ENCODE measurements at regions of chr6 and their contacts with region 1.

Region 1: DNA sequence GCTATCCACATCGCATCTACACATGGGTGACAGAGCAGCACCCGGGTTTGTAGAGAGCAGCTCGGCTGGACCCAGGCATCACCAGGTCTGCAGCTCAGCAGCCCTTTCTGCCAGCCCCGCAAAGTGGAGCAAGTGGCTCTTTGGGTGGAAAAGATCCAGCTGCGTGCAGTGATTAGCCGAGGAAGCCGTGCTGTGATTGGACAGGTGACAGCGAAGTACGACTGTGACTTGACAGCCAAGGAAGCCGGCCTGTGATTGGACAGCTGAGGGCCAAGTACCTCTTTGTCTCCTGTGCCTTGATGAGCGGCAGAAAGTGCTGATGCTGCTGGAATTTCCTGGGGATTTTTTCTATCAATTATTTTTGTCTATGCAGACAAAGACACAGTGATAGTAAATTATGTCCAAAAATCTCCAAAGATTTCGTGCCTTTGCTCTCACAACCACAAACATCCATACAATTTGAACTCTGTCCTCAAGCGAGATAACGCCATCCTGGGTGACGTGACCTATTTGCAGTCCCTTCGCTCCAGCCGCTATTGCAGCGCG is 62.3 kb upstream of the GPR31 start:
- DNase-seq: no peak
- H3K4me3 ChIP-seq: no peak overlapping the region
- H3K27ac ChIP-seq: no peak overlapping the region
- H3K4me1 ChIP-seq: no peaks in the 10 kb centered on the region
- H3K27me3 ChIP-seq: no peaks in the 10 kb centered on the region
- CTCF ChIP-seq: no peak
- POLR2A ChIP-seq: no peak

Region 2: GRCh38 chr6:167285077-167285770 is 65.2 kb after region 1 on chr6:
- intact Hi-C with region 1: loop called (anchors 10 kb)
- DNase-seq: no peak
- H3K4me3 ChIP-seq: no peak overlapping the region
- H3K27ac ChIP-seq: no peak overlapping the region
- H3K4me1 ChIP-seq: no peaks in the 10 kb centered on the region
- H3K27me3 ChIP-seq: no peaks in the 10 kb centered on the region
- CTCF ChIP-seq: no peak
- POLR2A ChIP-seq: no peak

Region 3: DNA sequence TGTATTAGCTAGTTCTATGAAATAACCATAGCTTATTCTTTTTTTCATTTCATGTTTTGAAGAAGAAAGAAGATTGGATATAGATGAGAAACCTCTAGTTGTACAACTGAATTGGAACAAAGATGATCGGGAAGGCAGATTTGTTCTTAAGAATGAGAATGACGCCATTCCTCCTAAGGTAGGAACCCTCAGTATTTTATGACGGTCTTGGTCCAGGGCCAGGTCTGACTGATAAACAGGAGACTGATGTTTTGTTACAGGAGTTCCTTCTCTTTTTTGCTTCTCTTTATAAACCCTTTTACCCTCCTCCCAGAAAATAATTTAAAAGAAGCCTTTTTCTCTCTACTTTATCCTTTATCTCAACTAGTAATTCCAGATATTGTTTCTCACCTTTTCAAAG is 650.3 kb after region 1 on chr6:
- intact Hi-C with region 1: no loop called
- DNase-seq: no peak
- H3K4me3 ChIP-seq: no peak overlapping the region
- H3K27ac ChIP-seq: no peak overlapping the region
- H3K4me1 ChIP-seq: no peaks in the 10 kb centered on the region
- H3K27me3 ChIP-seq: no peaks in the 10 kb centered on the region
- CTCF ChIP-seq: no peak
- POLR2A ChIP-seq: no peak